Aorta (tissue), 5 donors: ENCODE measurements at regions of chr11 and their contacts with region 1.

Region 1: GRCh38 chr11:67239783-67240575 is 26.3 kb upstream of the GRK2 start:
- DNase-seq: peak; percentile 98
- ATAC-seq: peak; percentile 99
- H3K4me3 ChIP-seq: peak overlapping the region; percentile 68 to 87
- H3K27ac ChIP-seq: peak overlapping the region; percentile 46 to 96
- H3K4me1 ChIP-seq: peaks cover 1 to 3% of the 10 kb centered on the region in 2 donors
- H3K27me3 ChIP-seq: no peaks in the 10 kb centered on the region

Region 2: GRCh38 chr11:67119585-67120391 is 120.2 kb before region 1 on chr11:
- intact Hi-C with region 1: loop called in 1 of 2 experiments (anchors 10 kb)
- DNase-seq: peak in 1 of 2 donors; percentile 78
- ATAC-seq: peak; percentile 2
- H3K4me3 ChIP-seq: peak overlapping the region; percentile 84 to 93
- H3K27ac ChIP-seq: peak overlapping the region; percentile 66 to 72
- H3K4me1 ChIP-seq: no peaks in the 10 kb centered on the region
- H3K27me3 ChIP-seq: no peaks in the 10 kb centered on the region

Region 3: DNA sequence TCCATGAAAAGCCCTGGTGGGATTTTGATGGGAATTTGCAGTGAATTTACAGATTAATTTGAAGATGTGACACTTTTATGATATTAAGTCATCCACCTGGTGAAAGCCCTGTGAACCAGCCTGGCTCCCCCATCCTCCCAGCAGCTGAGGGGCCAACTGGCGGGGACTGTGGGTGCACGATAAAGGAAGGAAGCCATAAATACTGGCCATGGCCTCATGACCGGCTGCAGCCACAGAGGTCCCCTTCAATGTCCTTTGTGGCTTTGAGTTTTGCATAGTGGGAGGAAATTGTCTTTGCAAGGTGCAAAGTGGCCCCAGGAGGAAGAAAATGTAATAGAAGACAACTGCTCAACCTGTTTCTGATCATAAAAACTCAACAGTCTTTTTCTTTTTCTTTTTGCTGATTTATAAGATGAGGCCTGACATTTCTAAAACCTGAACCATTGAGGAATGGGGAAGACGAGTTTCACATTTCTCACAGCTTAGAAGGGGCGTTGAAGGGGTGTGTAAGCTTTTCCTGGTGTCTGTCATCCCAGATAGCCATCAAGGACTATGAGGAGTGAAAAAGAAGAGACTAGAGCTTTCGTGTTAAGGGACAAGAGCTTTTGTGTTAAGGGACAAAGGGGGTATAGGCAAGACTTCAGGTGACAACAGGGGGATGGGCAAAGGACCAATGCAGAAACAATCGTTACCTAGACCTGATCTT is 360.5 kb after region 1 on chr11:
- intact Hi-C with region 1: no loop called
- DNase-seq: no peak
- ATAC-seq: no peak
- H3K4me3 ChIP-seq: no peak overlapping the region
- H3K27ac ChIP-seq: no peak overlapping the region
- H3K4me1 ChIP-seq: no peaks in the 10 kb centered on the region
- H3K27me3 ChIP-seq: no peaks in the 10 kb centered on the region